ENCODE measurements at regions of chr17 and their contacts with region 1.

Region 1: DNA sequence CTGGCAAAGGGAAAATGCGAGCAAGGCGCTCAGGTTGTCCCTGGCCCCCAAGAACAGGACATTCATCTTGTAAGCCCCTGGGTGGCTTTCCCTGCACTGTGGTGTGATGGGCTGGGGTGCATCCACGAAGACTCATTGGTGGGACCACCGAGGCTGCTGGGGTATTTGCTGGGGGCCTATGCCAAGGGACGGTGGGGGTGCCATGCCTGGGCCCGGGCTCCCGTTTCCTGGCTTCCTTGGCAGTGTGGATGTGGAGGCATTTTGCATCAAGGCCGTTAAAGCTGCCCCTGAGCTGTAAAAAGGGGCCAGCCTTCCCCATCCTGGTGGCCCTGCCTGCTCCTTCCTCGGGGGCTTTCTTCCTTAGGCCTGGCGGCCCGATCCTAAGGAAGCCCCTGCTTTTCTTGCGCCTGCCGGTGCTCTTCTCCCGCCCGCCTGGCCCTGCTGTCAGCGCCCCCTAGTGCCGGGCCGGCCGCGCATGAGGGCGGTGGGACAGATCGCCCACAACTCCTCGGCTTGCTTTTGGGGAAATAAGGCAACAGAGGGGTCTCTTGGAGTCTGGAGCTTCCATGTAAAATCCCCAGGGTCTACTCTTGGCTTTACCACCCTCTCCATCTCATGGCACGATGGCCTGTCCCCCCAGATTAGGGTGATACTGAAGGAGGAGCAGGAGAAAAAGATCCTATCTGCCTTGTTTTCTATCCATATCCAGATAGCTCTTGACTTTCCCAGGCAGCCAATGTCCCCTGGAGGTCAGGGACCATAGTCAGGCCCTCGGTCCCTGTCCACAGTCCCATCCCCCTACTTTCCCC is 9.8 kb upstream of the TBX2 start:
- DNase-seq: peak; percentile 65
- ATAC-seq: peak; percentile 75
- H3K4me3 Mint-ChIP-seq: no peak overlapping the region
- H3K27ac Mint-ChIP-seq: no peak overlapping the region
- H3K4me1 Mint-ChIP-seq: no peaks in the 10 kb centered on the region
- H3K27me3 Mint-ChIP-seq: peaks cover 7% of the 10 kb centered on the region
- CTCF ChIP-seq: peak; percentile 85

Region 2: GRCh38 chr17:61002316-61002736 is 387.5 kb before region 1 on chr17:
- CTCF ChIA-PET with region 1: interaction called, 3 read pairs
- POLR2A ChIA-PET with region 1: no interaction called
- intact Hi-C with region 1: loop called (anchors 5 kb)
- DNase-seq: no peak
- ATAC-seq: no peak
- H3K4me3 Mint-ChIP-seq: no peak overlapping the region
- H3K27ac Mint-ChIP-seq: no peak overlapping the region
- H3K4me1 Mint-ChIP-seq: no peaks in the 10 kb centered on the region
- H3K27me3 Mint-ChIP-seq: no peaks in the 10 kb centered on the region
- CTCF ChIP-seq: peak; percentile 78